Activated naive CD4-positive, alpha-beta T cell treated with anti-CD3 and anti-CD28 coated beads for 36 hours (primary cell): ENCODE measurements at regions of chr13 and their contacts with region 1.

Region 1: DNA sequence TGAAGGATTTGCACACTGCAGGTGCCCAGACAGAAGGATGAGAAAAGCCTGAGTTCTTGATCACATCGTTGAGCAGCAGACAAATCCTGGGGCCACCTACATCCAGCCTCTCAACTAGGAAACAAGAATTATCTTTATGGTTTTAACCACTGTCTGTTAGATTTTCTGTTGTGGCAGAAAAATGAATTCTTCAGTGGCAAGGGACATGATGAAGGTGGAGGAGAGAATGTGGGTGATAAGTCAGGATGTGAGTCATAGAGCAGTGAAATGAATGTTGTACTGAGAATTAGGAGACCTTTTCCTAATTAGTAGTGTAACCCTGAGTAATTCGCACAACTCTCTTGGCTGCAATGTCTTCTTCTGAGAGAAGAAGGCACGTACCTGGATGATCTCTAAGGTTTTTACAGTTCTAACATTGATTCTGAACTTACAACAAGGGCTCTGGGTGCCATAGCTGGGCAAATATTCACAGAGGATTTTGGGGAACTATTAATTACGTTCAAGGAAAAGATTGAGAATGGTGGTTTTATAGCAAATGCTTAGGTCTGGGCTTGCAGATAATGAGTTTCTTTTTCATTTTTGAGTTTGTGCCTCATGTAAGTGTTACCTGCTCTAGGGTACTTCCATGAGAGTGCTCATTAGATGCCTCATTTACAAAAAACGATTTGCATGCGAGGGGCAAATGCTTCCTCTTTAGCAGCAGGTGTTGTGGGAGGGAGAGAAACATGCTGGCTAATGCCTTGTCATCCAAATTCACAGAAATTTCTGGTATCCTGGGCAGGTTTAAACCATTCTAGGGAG is 111.0 kb upstream of the KL start:
- DNase-seq: peak; percentile 54
- H3K4me3 Mint-ChIP-seq: peak overlapping the region; percentile 51
- H3K27ac Mint-ChIP-seq: peak overlapping the region; percentile 86
- H3K4me1 Mint-ChIP-seq: peaks cover 29% of the 10 kb centered on the region
- H3K27me3 Mint-ChIP-seq: no peaks in the 10 kb centered on the region

Region 2: DNA sequence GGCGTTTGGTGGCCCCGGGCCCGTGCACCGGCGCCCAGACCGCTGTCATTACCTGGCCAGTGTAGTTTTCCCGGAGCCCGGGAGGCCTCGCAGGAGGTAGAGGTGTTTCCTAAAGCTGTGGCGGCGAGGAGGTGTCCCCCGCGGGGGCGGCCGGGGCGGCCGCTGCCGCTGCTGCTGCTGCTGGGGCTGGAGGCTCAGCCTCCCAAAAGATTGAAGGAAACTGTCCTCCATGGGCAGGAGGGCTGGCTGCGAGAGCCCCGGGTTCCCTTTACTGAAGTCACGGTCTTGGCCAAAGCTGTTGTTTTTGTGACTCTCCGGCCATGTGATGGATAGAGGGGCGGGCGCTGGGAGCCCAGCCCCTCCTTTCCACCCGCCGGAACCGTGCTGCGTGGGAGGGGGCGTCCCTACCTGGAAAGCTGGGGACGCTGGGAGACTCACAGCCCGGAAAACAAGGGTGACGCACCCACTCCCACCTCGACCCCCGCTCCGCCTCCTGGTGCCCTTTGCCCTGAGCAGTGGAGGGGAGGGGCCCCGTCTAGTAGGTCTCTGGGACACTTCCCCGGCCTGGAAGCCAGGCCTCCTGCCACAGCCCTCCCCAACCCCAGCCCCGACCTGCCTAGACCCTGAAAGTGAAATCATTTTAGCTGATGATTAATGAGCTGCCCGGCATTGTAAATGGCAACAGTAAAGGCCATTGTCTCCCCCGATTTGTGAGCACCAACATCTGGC is 477.2 kb before region 1 on chr13 and contains the start of gene N4BP2L1:
- CTCF ChIA-PET with region 1: no interaction called
- intact Hi-C with region 1: loop called (anchors 1 kb)
- DNase-seq: peak; percentile 95
- H3K4me3 Mint-ChIP-seq: peak within 1 kb of the TSS; percentile 94
- H3K27ac Mint-ChIP-seq: peak within 1 kb of the TSS; percentile 97
- H3K4me1 Mint-ChIP-seq: peaks cover 31% of the 10 kb centered on the region
- H3K27me3 Mint-ChIP-seq: no peaks in the 10 kb centered on the region
- total RNA-seq, gene N4BP2L1: 22.6 TPM

Region 3: DNA sequence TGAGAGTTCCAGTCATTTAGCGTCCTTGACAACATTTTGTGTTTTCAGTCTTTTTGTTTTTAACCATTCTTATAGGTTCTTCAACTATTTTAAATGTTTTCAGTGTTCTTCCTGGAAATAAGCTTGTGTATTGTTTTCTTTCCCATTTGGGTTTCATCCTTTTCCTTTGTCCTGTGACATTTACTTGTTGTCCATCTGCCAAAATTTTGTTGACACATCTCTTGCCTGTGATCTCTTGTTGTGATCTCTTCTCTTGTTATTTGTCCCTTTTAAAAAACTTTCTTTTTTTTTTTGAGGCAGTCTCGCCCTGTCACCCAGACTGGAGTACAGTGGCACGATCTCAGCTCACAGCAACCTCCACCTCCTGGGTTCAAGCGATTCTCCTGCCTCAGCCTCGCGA is 222.5 kb before region 1 on chr13:
- CTCF ChIA-PET with region 1: no interaction called
- intact Hi-C with region 1: loop called (anchors 5 kb)
- DNase-seq: no peak
- H3K4me3 Mint-ChIP-seq: no peak overlapping the region
- H3K27ac Mint-ChIP-seq: no peak overlapping the region
- H3K4me1 Mint-ChIP-seq: peaks cover 17% of the 10 kb centered on the region
- H3K27me3 Mint-ChIP-seq: no peaks in the 10 kb centered on the region

Region 4: GRCh38 chr13:32783067-32783466 is 122.2 kb before region 1 on chr13:
- CTCF ChIA-PET with region 1: no interaction called
- intact Hi-C with region 1: loop called (anchors 1 kb)
- DNase-seq: peak; percentile 42
- H3K4me3 Mint-ChIP-seq: no peak overlapping the region
- H3K27ac Mint-ChIP-seq: peak overlapping the region; percentile 15
- H3K4me1 Mint-ChIP-seq: peaks cover 15% of the 10 kb centered on the region
- H3K27me3 Mint-ChIP-seq: no peaks in the 10 kb centered on the region

Region 5: DNA sequence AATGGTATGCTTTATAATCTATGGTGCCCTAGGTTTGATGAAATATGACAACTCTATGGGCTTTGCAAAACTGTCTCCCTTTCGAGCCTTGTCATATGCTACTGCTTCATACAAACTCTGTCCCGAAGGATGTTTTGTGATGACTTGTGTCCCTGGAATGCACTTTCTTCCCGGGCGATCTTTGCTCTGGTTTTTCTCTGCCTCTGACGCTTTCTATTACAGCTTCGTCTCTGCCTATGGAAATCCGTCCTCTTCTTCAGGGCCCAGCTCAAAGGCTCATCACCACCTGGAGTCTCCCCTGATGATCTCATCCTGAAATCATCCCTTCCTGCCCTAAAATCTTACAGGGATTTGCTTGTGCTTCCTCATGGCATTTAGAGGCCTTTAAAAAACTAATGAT is 80.6 kb before region 1 on chr13:
- CTCF ChIA-PET with region 1: no interaction called
- intact Hi-C with region 1: no loop called
- DNase-seq: no peak
- H3K4me3 Mint-ChIP-seq: no peak overlapping the region
- H3K27ac Mint-ChIP-seq: no peak overlapping the region
- H3K4me1 Mint-ChIP-seq: no peaks in the 10 kb centered on the region
- H3K27me3 Mint-ChIP-seq: no peaks in the 10 kb centered on the region

Region 6: DNA sequence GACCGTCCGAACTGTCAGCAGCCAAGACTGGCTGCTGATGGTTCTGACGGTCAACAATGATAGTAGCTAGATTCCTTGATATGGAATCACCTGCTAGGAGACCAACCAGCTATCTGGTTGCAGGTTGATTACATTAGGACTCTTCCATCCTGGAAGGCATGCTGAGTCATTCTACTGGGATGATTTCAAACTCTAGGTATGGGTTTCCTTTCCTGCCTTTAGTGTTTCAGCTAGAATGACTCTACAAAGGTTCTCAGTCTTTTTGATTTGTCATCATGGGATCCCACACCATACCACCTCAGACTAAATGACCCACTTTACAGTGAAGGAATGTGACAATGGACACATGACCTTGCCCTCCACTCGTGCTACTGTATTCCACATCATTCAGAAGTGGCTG is 27.1 kb before region 1 on chr13:
- CTCF ChIA-PET with region 1: no interaction called
- intact Hi-C with region 1: loop called (anchors 2 kb)
- DNase-seq: no peak
- H3K4me3 Mint-ChIP-seq: no peak overlapping the region
- H3K27ac Mint-ChIP-seq: no peak overlapping the region
- H3K4me1 Mint-ChIP-seq: no peaks in the 10 kb centered on the region
- H3K27me3 Mint-ChIP-seq: no peaks in the 10 kb centered on the region

Region 7: GRCh38 chr13:33146843-33147611 is 241.8 kb after region 1 on chr13:
- CTCF ChIA-PET with region 1: no interaction called
- intact Hi-C with region 1: loop called (anchors 1 kb)
- DNase-seq: peak; percentile 38
- H3K4me3 Mint-ChIP-seq: no peak overlapping the region
- H3K27ac Mint-ChIP-seq: no peak overlapping the region
- H3K4me1 Mint-ChIP-seq: peaks cover 9% of the 10 kb centered on the region
- H3K27me3 Mint-ChIP-seq: peaks cover 17% of the 10 kb centered on the region

Region 8: GRCh38 chr13:33204130-33204927 is 299.1 kb after region 1 on chr13:
- CTCF ChIA-PET with region 1: no interaction called
- intact Hi-C with region 1: no loop called
- DNase-seq: no peak
- H3K4me3 Mint-ChIP-seq: no peak overlapping the region
- H3K27ac Mint-ChIP-seq: no peak overlapping the region
- H3K4me1 Mint-ChIP-seq: peaks cover 7% of the 10 kb centered on the region
- H3K27me3 Mint-ChIP-seq: peaks cover 23% of the 10 kb centered on the region

Region 9: DNA sequence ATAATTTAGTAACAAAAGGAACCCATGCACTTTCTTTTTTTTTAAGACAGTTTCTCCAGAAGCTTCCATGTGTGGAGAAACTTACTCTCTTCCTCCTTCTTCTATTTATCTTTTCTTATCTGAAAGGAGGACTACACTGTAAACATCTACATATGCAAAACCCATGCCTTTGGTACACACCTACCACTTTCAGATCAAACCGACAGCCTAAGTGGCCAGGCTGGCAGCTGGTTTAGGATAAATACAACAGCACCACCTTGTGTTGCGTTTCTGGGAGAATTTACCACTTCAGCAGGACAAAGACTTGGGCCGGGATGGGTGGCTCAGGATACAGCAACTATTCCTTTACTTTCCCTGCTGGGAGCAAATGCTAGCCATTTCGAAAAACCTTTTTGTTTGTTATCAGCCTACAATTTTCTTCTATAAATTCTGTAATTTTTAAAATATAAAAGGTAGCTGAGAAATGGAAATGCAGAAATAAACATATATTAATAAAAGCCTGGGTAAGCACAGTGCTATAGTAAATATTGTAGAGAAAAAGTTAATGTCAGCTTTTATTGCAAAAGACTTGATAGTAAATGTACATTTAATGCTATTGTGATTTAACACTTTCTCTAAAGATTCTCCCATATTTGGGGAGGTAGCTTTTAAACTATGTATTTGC is 818.6 kb after region 1 on chr13:
- CTCF ChIA-PET with region 1: no interaction called
- intact Hi-C with region 1: loop called (anchors 10 kb)
- DNase-seq: peak; percentile 82
- H3K4me3 Mint-ChIP-seq: no peak overlapping the region
- H3K27ac Mint-ChIP-seq: no peak overlapping the region
- H3K4me1 Mint-ChIP-seq: peaks cover 27% of the 10 kb centered on the region
- H3K27me3 Mint-ChIP-seq: no peaks in the 10 kb centered on the region